ENCODE measurements at regions of chr4 and their contacts with region 1.

Region 1: GRCh38 chr4:113971706-113972360 is 7.6 kb downstream of the ARSJ start:
- DNase-seq: no peak
- ATAC-seq: no peak
- H3K4me3 ChIP-seq: no peak overlapping the region
- H3K27ac ChIP-seq: no peak overlapping the region
- H3K4me1 ChIP-seq: no peaks in the 10 kb centered on the region
- H3K27me3 ChIP-seq: no peaks in the 10 kb centered on the region
- CTCF ChIP-seq: no peak

Region 2: DNA sequence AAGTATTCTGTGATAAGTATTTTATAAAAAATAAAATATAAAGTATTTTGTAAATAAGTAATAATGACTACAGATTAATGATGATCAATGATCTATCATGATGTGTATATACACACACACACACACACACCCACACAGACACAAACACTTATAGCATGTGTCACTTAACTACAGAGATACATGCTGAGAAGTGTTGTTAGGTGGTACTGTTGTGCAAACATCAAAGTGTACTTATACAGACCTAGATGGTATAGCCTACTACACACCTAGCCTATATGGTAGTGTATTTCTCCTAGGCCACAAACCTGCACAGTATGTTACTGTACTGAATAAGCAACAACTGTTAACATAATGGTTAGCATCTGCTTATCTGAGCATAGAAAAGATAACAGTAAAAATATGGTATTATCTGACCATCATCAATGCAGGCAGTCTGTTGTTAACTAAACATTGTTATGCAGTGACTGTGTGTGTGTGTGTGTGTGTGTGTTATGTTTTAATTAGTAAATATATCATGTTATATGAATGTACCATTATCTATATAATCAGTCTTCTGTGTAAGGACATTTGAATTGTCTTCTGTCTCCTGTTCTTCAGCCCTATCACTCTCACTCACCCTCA is 348.4 kb before region 1 on chr4:
- intact Hi-C with region 1: loop called in 1 of 2 experiments (anchors 5 kb)
- DNase-seq: no peak
- ATAC-seq: no peak
- H3K4me3 ChIP-seq: no peak overlapping the region
- H3K27ac ChIP-seq: no peak overlapping the region
- H3K4me1 ChIP-seq: peaks cover 4% of the 10 kb centered on the region
- H3K27me3 ChIP-seq: no peaks in the 10 kb centered on the region
- CTCF ChIP-seq: no peak

Region 3: GRCh38 chr4:113809311-113809710 is 162.5 kb before region 1 on chr4:
- intact Hi-C with region 1: no loop called
- DNase-seq: peak in 1 of 2 donors; percentile 11
- ATAC-seq: no peak
- H3K4me3 ChIP-seq: no peak overlapping the region
- H3K27ac ChIP-seq: no peak overlapping the region
- H3K4me1 ChIP-seq: no peaks in the 10 kb centered on the region
- H3K27me3 ChIP-seq: no peaks in the 10 kb centered on the region
- CTCF ChIP-seq: no peak